ENCODE measurements at regions of chr7 and their contacts with region 1.

Region 1: GRCh38 chr7:66654123-66654732 is 25.5 kb downstream of the KCTD7 start:
- DNase-seq: peak; percentile 92
- ATAC-seq: peak; percentile 89
- H3K4me3 ChIP-seq: peak overlapping the region; percentile 68 to 90
- H3K27ac ChIP-seq: peak overlapping the region; percentile 87
- H3K4me1 ChIP-seq: peaks cover 8 to 20% of the 10 kb centered on the region in 2 experiments
- H3K27me3 ChIP-seq: no peaks in the 10 kb centered on the region
- CTCF ChIP-seq: 0 out of 6 replicates have a peak, but pooled peaks of 1 of the 3 experiments have one; percentile 6
- POLR2A ChIP-seq: peak; percentile 86
- RAD21 ChIP-seq: peak; percentile 19; the same call in 1 of the 2 replicates

Region 2: GRCh38 chr7:66557608-66558143 is 96.6 kb before region 1 on chr7:
- CTCF ChIA-PET with region 1: no interaction called
- POLR2A ChIA-PET with region 1: no interaction called
- RAD21 ChIA-PET with region 1: no interaction called
- intact Hi-C with region 1: loop called (anchors 10 kb)
- DNase-seq: no peak
- ATAC-seq: peak; percentile 86
- H3K4me3 ChIP-seq: no peak overlapping the region
- H3K27ac ChIP-seq: no peak overlapping the region
- H3K4me1 ChIP-seq: no peaks in the 10 kb centered on the region; a peak in 1 of 4 replicates
- H3K27me3 ChIP-seq: no peaks in the 10 kb centered on the region
- CTCF ChIP-seq: peak; percentile 43 to 97 (median 96); a peak in 5 of 6 replicates
- POLR2A ChIP-seq: no peak
- RAD21 ChIP-seq: peak; percentile 89

Region 3: GRCh38 chr7:66740302-66740979 is 86.2 kb after region 1 on chr7 and contains the start of gene RABGEF1:
- CTCF ChIA-PET with region 1: no interaction called
- POLR2A ChIA-PET with region 1: no interaction called
- RAD21 ChIA-PET with region 1: no interaction called
- intact Hi-C with region 1: loop called (anchors 5 kb)
- DNase-seq: peak; percentile 89
- ATAC-seq: peak; percentile 85
- H3K4me3 ChIP-seq: peak within 1 kb of the TSS; percentile 88 to 95
- H3K27ac ChIP-seq: peak within 1 kb of the TSS; percentile 90
- H3K4me1 ChIP-seq: peaks cover 0 to 16% of the 10 kb centered on the region in 2 experiments; a peak in 2 of 4 replicates
- H3K27me3 ChIP-seq: no peaks in the 10 kb centered on the region
- CTCF ChIP-seq: no peak
- POLR2A ChIP-seq: peak; percentile 65
- RAD21 ChIP-seq: no peak
- total RNA-seq, gene RABGEF1: 22.9 TPM

Region 4: DNA sequence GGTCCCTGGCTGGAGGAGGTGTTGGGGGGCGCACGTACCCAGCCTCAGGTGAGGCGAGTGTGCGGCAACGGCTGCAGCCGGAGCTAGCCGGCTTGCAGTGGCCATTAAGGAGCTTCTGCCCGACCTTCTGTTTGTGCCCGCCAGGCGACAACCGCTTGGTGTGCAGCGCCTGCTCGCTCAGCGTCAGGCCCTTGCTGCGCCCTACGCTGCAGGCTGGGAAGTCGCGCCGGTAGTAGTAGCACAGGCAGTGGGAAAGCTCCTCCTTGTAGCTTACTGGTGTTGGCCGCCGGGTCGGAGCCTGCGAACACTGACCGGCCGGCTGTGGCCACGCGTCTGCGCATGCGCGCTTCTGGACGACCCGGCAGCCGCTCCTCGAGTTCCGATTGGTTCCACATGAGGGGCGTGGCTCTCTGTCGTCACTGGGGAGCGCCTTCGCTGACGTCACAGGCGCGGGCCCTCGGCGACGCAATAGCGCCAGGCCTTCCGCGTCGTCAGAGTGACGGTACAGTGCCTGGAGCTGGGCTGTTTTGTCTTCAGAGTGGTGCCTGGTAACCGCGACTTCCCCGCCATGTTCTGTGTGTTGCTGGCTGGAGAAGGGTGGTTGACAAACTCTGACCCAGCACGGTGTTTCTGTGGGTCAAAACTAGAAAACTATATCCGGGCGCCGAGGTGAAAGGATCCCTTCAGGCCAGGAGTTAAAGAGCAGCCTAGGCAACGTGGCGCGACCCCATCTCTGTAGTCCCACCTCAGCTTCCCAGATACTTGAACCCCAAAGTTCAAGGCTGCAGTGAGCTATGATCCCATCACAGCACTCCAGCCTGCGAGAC is 190.5 kb after region 1 on chr7:
- CTCF ChIA-PET with region 1: no interaction called
- POLR2A ChIA-PET with region 1: no interaction called
- RAD21 ChIA-PET with region 1: no interaction called
- intact Hi-C with region 1: loop called (anchors 10 kb)
- DNase-seq: peak; percentile 95
- ATAC-seq: peak; percentile 92
- H3K4me3 ChIP-seq: peak overlapping the region; percentile 77 to 92
- H3K27ac ChIP-seq: peak overlapping the region; percentile 50
- H3K4me1 ChIP-seq: peaks cover 4 to 19% of the 10 kb centered on the region in 2 experiments; a peak in 2 of 4 replicates
- H3K27me3 ChIP-seq: no peaks in the 10 kb centered on the region
- CTCF ChIP-seq: peak in 1 of 3 experiments; percentile 14; a peak in 2 of 6 replicates
- POLR2A ChIP-seq: peak; percentile 83
- RAD21 ChIP-seq: no peak

Measured in HCT116 (cell line).